Activated naive CD4-positive, alpha-beta T cell treated with anti-CD3 and anti-CD28 coated beads for 36 hours (primary cell): ENCODE measurements at regions of chr1 and their contacts with region 1.

Region 1: GRCh38 chr1:211352985-211353515 is 26.4 kb downstream of the TRAF5 start:
- DNase-seq: peak; percentile 70
- H3K4me3 Mint-ChIP-seq: peak overlapping the region; percentile 15
- H3K27ac Mint-ChIP-seq: peak overlapping the region; percentile 83
- H3K4me1 Mint-ChIP-seq: peaks cover 62% of the 10 kb centered on the region
- H3K27me3 Mint-ChIP-seq: no peaks in the 10 kb centered on the region

Region 2: DNA sequence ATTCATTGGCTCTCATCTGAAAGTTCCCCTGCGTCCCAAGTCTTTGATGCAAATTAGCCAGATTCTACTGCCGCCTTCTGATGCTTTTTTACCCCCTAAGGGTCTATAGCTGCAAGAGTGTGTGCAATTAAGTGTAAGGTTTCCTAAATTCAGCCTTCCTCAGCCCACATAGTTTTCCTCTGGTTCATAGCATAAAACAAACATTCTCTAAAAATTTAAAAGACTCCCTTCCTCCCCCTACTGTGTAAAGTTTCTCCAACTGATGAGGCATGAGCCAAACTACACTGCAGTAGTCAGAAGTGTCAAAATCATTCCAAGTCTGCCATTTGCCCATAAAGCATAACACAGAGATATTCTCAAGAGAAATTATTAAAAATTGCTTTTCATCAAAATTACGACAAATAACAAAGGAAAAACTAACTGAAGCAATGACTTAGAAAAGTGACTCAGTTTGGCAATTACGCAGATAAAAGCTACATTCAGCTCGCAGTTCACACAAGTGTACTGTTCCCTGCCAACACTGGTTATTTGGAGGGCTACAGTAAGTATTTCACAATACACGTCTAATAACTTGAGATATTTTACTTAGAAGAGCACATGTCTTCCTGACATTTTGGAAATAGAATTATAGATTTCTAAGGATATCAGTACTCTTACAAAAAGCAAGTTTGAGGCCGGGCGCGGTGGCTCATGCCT is 234.5 kb before region 1 on chr1:
- CTCF ChIA-PET with region 1: no interaction called
- intact Hi-C with region 1: no loop called
- DNase-seq: no peak
- H3K4me3 Mint-ChIP-seq: no peak overlapping the region
- H3K27ac Mint-ChIP-seq: no peak overlapping the region
- H3K4me1 Mint-ChIP-seq: no peaks in the 10 kb centered on the region
- H3K27me3 Mint-ChIP-seq: peaks cover 29% of the 10 kb centered on the region

Region 3: DNA sequence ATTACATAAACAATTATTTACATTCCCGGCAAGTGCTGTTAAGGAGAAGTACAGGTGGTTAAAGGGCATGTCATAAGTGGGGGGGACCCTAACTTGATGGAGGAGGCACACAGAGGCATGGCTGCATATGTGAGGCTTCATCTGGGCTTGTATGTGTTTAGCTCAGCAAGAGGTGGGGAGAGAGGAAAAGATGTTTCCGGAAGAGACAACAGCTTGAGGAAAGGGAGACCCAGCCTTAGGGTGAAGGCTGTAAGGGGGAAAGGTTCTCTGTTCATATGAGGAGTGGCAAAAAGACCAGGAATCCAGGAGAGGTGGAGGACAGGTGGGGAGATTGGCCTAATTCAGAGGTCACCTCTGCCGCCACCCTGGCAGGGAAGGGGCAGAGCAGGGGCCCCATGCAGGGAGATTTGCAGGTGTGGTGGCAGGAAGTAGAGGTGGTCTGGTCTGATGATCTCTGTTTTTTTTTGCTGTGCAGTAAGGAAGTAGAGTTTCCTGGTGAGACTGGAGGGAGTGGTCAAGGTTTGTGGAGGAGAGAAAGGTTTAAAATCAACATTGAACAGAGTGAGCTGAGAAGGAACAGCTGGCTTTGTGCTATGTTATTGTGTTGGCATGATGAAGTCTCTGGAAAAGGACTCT is 17.4 kb before region 1 on chr1:
- CTCF ChIA-PET with region 1: interaction called, 4 read pairs
- intact Hi-C with region 1: loop called (anchors 1 kb)
- DNase-seq: peak; percentile 42
- H3K4me3 Mint-ChIP-seq: peak overlapping the region; percentile 49
- H3K27ac Mint-ChIP-seq: peak overlapping the region; percentile 85
- H3K4me1 Mint-ChIP-seq: peaks cover 84% of the 10 kb centered on the region
- H3K27me3 Mint-ChIP-seq: no peaks in the 10 kb centered on the region